ENCODE measurements at regions of chr18 and their contacts with region 1.

Region 1: DNA sequence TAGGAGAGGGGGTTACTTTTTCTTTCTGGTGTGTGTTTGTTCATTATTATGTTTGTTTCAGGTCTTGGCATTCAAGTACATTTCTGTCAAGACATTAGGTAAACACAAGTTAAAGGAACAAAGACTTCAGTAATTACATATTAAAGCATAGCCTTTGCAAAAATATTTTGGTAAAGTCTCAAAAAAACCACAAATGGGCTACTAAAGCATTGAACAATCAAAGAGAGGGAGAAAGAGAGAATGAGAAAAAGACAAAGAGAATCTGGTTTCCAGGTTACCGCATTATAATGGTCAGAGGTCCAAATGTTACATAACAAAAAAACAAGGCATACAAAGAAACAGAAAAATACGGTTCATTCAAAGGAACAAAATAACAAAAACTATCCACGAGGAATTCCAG is 328.0 kb downstream of the AKAIN1 start:
- DNase-seq: no peak
- ATAC-seq: no peak

Region 2: DNA sequence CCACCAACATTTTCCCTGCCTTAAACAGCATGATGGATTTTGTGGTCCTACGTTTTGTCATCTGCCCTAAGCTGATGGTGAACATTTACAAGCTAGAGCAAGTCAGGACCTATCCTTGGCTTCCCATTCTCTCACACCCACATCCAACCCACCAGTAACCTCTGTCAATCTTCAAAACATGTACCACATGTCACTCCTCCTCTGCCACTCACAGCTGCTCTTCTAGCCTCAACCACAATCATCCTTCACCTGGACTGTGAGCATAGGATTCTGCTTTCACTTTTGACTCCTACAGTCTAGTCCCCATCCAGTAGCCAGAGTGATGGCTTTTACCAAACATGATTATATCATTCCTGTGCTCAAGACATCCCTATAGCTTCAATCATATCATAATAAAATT is 134.2 kb before region 1 on chr18:
- intact Hi-C with region 1: no loop called
- DNase-seq: no peak
- ATAC-seq: no peak

Region 3: GRCh38 chr18:4807604-4808293 is 61.4 kb before region 1 on chr18:
- intact Hi-C with region 1: loop called in 1 of 2 experiments (anchors 10 kb)
- DNase-seq: no peak
- ATAC-seq: peak in 1 of 2 donors; percentile 53

Region 4: GRCh38 chr18:4908328-4908727 is 39.2 kb after region 1 on chr18:
- intact Hi-C with region 1: no loop called
- DNase-seq: no peak
- ATAC-seq: no peak

Measured in left cardiac atrium (tissue), 4 donors.